Activated CD4-positive, alpha-beta T cell treated with anti-CD3 and anti-CD28 coated beads for 36 hours (primary cell): ENCODE measurements at regions of chr6 and their contacts with region 1.

Region 1: GRCh38 chr6:30489081-30490025 is at the start of gene HLA-E:
- DNase-seq: peak; percentile 92
- ATAC-seq: peak; percentile 78
- H3K4me3 Mint-ChIP-seq: peak within 1 kb of the TSS; percentile 95
- H3K27ac Mint-ChIP-seq: peak within 1 kb of the TSS; percentile 98
- H3K4me1 Mint-ChIP-seq: peaks cover 43% of the 10 kb centered on the region
- H3K27me3 Mint-ChIP-seq: no peaks in the 10 kb centered on the region
- total RNA-seq, gene HLA-E: 451 to 502 TPM

Region 2: DNA sequence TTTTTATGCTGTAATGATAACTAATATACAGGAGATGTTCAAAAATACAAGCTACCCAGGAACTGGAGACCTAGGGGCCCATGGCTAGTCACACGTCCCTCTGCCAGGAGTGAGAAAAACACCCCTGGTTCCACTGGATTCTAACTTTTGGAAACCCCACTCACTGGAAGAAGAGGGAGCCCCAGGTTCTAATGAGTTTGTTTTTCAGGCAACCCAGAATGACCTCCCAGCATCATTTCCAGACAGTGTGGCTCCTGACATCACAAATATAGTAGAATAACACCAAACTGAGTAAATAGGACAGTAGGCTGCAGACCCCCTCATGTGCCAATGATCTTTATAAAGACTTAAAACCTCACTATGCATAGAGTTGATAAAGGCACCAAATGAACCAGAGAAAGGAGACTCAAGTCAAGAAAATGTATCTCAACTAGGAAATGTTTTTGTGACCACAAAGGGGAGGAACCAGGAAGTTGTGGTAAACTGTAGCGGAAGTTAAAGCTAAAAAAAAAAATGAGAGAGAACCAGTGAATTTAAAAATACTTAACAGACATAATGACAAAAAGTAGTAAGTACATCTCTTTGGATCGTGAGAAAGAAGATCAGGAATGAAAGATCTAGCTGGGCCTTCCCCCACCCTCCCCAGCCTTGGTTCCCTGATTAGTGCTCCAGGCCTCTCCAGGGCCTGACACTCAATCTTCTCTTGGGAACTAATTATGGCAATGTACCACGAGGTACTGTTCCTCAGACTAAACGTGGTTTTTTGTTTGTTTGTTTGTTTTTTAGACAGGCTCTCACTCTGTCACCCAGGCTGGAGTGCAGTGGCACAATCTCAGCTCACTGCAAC is 19.8 kb after region 1 on chr6:
- CTCF ChIA-PET with region 1: interaction called, 10 read pairs
- POLR2A ChIA-PET with region 1: interaction called, 6 read pairs
- intact Hi-C with region 1: loop called (anchors 2 kb)
- DNase-seq: peak; percentile 37
- ATAC-seq: peak; percentile 71
- H3K4me3 Mint-ChIP-seq: peak overlapping the region; percentile 51
- H3K27ac Mint-ChIP-seq: peak overlapping the region; percentile 94
- H3K4me1 Mint-ChIP-seq: peaks cover 60% of the 10 kb centered on the region
- H3K27me3 Mint-ChIP-seq: no peaks in the 10 kb centered on the region

Region 3: DNA sequence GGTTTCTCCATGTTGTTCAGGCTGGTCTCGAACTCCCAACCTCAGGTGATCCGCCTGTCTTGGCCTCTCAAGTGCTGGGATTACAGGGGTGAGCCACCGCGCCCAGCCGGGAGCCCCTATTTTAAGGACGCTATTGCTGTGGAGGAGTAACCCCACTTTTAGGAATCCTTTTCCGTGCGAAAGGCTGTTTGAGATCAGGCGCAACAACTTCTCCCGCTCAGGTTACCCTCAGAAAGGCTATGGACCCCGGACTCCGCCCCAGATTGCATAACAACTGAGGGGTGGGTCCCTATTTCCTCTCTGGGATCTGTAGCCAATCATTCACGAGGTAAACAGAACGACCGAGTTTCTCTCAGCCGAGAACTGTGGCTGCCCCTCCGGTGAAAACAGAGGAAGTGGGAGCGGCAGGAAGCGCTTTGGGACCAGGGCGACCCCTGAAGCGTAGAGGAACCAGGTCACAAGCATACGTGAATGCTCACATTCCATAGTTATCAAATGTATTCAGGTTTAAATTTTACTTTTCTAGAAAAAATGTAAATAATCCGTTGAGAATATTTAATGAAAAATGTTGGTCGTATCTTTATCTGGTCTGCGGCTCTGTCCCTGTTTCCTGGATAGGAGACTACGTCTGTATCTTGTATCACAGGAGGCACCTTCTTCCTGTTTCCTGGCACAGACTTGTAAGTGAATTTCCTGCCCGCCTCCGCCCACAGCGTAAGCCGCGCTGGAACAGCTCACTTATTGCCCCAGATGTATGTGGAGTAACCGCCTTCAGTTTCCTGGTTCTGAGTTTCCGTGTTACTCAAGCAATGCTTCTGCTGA is 26.8 kb after region 1 on chr6:
- CTCF ChIA-PET with region 1: interaction called, 8 read pairs
- POLR2A ChIA-PET with region 1: interaction called, 6 read pairs
- intact Hi-C with region 1: loop called in 1 of 2 experiments (anchors 1 kb)
- DNase-seq: peak; percentile 96
- ATAC-seq: peak; percentile 87
- H3K4me3 Mint-ChIP-seq: peak overlapping the region; percentile 74
- H3K27ac Mint-ChIP-seq: peak overlapping the region; percentile 98
- H3K4me1 Mint-ChIP-seq: peaks cover 69% of the 10 kb centered on the region
- H3K27me3 Mint-ChIP-seq: no peaks in the 10 kb centered on the region

Region 4: GRCh38 chr6:30571075-30571768 is 81.9 kb after region 1 on chr6 and contains the start of gene ABCF1:
- CTCF ChIA-PET with region 1: no interaction called
- POLR2A ChIA-PET with region 1: no interaction called
- intact Hi-C with region 1: loop called in 1 of 2 experiments (anchors 1 kb)
- DNase-seq: peak; percentile 100
- ATAC-seq: peak; percentile 86
- H3K4me3 Mint-ChIP-seq: peak within 1 kb of the TSS; percentile 94
- H3K27ac Mint-ChIP-seq: peak within 1 kb of the TSS; percentile 100
- H3K4me1 Mint-ChIP-seq: peaks cover 62% of the 10 kb centered on the region
- H3K27me3 Mint-ChIP-seq: no peaks in the 10 kb centered on the region
- total RNA-seq, gene ABCF1: 100.0 to 105 TPM

Region 5: DNA sequence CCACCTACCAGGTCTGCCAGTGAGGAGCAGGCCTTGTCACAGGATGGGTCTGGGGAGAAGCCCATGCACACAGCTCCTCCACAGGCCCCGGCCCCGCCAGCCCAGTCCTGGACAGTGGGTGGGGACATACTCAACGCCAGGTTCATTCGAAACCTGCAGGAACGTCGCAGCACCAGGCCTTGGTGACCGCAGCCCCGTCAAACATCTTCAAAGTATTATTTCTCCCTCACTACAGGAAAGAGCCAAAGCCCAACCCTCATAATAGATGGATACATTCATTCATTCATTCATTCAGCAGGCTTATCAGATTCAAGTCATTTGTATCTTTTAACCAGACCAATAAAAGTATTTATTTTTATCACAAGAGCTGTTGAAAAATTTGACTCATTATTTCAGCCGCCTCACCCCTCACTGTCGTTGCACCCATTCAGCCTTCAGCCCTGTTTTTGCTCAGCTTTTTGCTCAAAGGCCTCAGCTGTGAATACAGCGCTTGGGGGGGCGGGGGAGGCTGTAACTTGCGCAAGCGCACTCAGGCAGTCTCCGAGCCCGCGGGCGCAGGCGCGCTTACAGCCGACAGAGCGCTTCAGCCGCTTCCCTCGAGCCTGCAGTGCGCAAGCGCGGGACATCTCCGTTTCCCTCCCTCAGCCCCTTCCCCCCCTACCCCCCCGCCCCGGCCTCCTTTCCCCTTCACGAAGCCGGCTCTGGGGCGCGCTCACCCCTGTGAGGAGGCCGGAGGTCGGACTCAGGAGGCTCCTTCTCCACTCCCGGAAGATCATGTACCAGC is 157.3 kb after region 1 on chr6 and contains the start of gene C6orf136:
- CTCF ChIA-PET with region 1: no interaction called
- POLR2A ChIA-PET with region 1: no interaction called
- intact Hi-C with region 1: loop called in 1 of 2 experiments (anchors 1 kb)
- DNase-seq: peak; percentile 97
- ATAC-seq: peak; percentile 86
- H3K4me3 Mint-ChIP-seq: peak within 1 kb of the TSS; percentile 78
- H3K27ac Mint-ChIP-seq: peak within 1 kb of the TSS; percentile 88
- H3K4me1 Mint-ChIP-seq: peaks cover 20% of the 10 kb centered on the region
- H3K27me3 Mint-ChIP-seq: no peaks in the 10 kb centered on the region
- total RNA-seq, gene C6orf136: 26.5 to 30.8 TPM

Region 6: DNA sequence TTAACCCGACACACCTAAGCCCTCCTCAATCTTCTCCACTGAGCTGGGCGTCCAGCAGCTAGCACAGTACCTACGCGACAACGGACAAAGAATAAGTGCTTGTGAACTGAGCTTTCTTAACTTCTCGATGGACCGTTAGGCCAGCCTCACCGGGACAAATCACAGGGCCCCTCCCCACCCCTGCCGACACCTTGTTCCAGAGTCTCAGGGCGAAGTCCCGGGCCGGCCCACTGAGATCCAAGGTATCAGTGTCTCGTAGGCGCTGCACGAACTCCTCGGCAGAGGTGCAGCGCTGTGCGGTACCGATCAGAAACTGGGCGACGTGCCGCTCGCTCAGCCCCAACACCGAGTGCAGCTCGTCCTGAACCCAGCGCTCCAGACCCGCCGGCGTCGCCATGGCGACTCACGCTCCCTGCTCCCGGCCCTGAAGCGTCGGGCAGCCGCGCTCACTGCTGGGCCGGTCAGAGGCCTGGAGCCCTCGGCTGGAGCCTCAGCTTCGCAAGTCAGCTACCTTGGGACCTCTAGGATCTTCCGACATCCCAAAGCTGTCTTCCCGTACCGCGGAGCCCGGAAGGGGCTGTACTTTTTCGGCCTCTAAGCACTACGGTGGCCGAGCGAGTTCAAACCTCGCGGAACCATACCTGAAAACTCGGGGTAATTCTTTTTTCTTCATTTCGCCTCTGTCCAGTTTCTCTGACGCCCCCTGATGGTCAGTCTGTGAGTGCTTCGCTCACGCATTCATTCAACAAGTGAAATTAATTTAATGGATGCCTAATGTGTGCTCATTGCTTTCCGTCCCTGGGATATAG is 183.3 kb after region 1 on chr6 and contains the start of gene DHX16:
- CTCF ChIA-PET with region 1: interaction called, 4 read pairs
- POLR2A ChIA-PET with region 1: no interaction called
- intact Hi-C with region 1: loop called in 1 of 2 experiments (anchors 2 kb)
- DNase-seq: peak; percentile 93
- ATAC-seq: peak; percentile 83
- H3K4me3 Mint-ChIP-seq: peak within 1 kb of the TSS; percentile 82
- H3K27ac Mint-ChIP-seq: peak within 1 kb of the TSS; percentile 83
- H3K4me1 Mint-ChIP-seq: peaks cover 27% of the 10 kb centered on the region
- H3K27me3 Mint-ChIP-seq: no peaks in the 10 kb centered on the region
- total RNA-seq, gene DHX16: 34.5 to 36.7 TPM